ENCODE measurements at regions of chr4 and their contacts with region 1.

Region 1: GRCh38 chr4:170736710-170737109 is 647.0 kb upstream of the AADAT start:
- DNase-seq: peak; percentile 65
- H3K4me3 ChIP-seq: no peak overlapping the region
- H3K27ac ChIP-seq: no peak overlapping the region
- H3K4me1 ChIP-seq: peaks cover 9% of the 10 kb centered on the region
- H3K27me3 ChIP-seq: no peaks in the 10 kb centered on the region
- CTCF ChIP-seq: no peak

Region 2: GRCh38 chr4:170682558-170683294 is 54.0 kb before region 1 on chr4:
- CTCF ChIA-PET with region 1: no interaction called
- dilution Hi-C with region 1: no loop called
- in situ Hi-C with region 1: no loop called
- intact Hi-C with region 1: no loop called
- DNase-seq: no peak
- H3K4me3 ChIP-seq: no peak overlapping the region
- H3K27ac ChIP-seq: no peak overlapping the region
- H3K4me1 ChIP-seq: no peaks in the 10 kb centered on the region
- H3K27me3 ChIP-seq: no peaks in the 10 kb centered on the region
- CTCF ChIP-seq: no peak

Region 3: DNA sequence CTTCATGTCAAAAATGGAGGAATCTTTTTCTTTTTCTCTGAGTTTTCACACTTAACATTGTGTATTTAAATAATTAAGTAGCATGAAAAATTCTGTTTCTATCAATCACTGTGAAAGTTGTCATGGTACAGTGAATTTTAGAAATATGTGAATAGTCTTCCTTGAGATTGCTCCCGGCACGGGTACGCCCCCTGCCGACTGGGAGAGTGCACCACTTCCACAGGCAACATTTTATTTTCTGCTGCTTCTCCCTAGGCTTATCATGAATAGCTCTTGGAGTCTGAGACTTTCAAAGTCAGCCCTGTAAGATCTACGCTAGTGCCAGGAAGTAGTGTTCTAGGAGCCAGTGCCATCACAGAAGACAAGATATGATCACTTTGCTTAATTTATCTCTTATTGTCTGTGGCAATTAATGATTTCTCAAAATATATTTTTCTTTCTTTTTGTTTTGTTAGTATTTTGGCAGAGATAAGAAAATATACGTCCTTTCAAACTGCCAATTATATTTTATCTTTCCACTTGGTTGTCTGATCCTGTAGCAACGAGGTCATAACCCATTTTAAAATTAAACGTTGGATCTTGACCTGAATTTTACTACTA is 116.8 kb after region 1 on chr4:
- CTCF ChIA-PET with region 1: no interaction called
- dilution Hi-C with region 1: no loop called
- in situ Hi-C with region 1: no loop called
- intact Hi-C with region 1: loop called (anchors 10 kb)
- DNase-seq: peak; percentile 44
- H3K4me3 ChIP-seq: no peak overlapping the region
- H3K27ac ChIP-seq: no peak overlapping the region
- H3K4me1 ChIP-seq: peaks cover 5% of the 10 kb centered on the region
- H3K27me3 ChIP-seq: no peaks in the 10 kb centered on the region
- CTCF ChIP-seq: peak; percentile 93 to 97